Psoas muscle (tissue), 8 donors: ENCODE measurements at regions of chr12 and their contacts with region 1.

Region 1: GRCh38 chr12:4434706-4435425 is 10.7 kb downstream of the FGF6 start:
- DNase-seq: no peak
- ATAC-seq: no peak
- H3K4me3 ChIP-seq: no peak overlapping the region
- H3K27ac ChIP-seq: peak overlapping the region; percentile 77
- H3K4me1 ChIP-seq: peaks cover 24% of the 10 kb centered on the region
- H3K27me3 ChIP-seq: no peaks in the 10 kb centered on the region
- CTCF ChIP-seq: no peak

Region 2: DNA sequence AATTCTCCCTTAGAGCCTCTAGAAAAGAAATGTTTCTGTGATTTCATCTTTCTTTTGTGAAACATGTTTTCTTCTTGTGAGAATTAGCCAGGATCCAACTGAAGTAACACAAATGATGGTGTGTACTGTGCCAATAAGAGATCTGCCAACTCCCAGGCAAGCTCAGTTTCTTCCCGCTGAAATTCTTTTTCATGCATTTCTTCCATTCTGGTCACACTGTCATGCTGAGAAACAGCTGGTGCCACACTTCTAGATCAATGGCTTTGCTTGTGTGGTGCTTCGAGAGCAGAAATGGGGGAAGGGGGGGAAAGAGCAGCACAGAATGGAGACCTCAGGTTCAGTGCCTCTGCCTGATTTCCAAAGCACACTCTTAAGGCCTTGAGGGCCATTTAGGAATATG is 52.1 kb after region 1 on chr12:
- intact Hi-C with region 1: loop called in 1 of 2 experiments (anchors 5 kb)
- DNase-seq: no peak
- ATAC-seq: no peak
- H3K4me3 ChIP-seq: no peak overlapping the region
- H3K27ac ChIP-seq: no peak overlapping the region
- H3K4me1 ChIP-seq: peaks cover 14% of the 10 kb centered on the region
- H3K27me3 ChIP-seq: no peaks in the 10 kb centered on the region
- CTCF ChIP-seq: no peak

Region 3: DNA sequence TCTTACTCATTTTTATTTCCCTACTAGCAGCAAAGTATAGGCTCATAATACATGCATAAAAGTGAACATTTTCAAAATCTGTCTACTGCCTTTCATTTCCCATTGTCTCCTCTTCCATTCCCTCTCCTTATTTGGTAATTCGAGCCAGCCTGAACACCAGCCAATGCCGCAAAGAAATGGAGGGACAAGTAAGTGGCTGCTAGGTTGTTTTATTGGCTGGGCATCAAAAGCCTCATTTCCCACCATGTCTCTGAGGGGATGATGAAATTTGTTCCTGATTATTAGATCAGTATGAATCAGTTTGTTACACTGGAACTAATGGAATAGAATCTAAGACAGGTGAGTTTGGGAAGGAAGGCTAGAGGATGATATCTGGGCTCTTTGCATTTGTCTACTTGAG is 752.3 kb after region 1 on chr12:
- intact Hi-C with region 1: loop called in 1 of 2 experiments (anchors 5 kb)
- DNase-seq: no peak
- ATAC-seq: no peak
- H3K4me3 ChIP-seq: no peak overlapping the region
- H3K27ac ChIP-seq: no peak overlapping the region
- H3K4me1 ChIP-seq: peaks cover 10% of the 10 kb centered on the region
- H3K27me3 ChIP-seq: no peaks in the 10 kb centered on the region
- CTCF ChIP-seq: no peak